Esophagus muscularis mucosa (tissue), 4 donors: ENCODE measurements at regions of chr17 and their contacts with region 1.

Region 1: DNA sequence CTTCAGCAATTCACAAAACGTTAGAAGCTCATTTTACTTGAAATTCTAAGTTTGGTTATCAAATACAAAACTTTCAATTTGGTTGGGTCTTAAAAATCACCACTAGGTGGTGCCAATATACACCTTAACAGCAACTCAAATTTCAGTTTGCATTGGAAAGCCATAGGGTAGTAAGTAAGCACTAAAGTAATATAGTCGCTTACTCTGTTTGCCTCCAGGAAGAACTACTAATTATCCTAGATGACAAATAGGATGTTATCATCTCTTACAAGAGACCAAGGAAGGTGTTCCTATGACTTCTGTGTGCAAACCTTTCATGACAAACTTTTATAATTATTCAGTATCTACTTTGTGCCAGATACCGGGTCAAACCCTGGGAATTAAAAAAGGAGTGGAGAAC is 93.3 kb downstream of the MYO1D start:
- DNase-seq: no peak
- H3K4me3 ChIP-seq: no peak overlapping the region
- H3K27ac ChIP-seq: no peak overlapping the region
- H3K4me1 ChIP-seq: no peaks in the 10 kb centered on the region
- H3K27me3 ChIP-seq: no peaks in the 10 kb centered on the region
- CTCF ChIP-seq: peak; percentile 74 to 84 (median 78)
- EP300 ChIP-seq: no peak
- POLR2A ChIP-seq: no peak

Region 2: DNA sequence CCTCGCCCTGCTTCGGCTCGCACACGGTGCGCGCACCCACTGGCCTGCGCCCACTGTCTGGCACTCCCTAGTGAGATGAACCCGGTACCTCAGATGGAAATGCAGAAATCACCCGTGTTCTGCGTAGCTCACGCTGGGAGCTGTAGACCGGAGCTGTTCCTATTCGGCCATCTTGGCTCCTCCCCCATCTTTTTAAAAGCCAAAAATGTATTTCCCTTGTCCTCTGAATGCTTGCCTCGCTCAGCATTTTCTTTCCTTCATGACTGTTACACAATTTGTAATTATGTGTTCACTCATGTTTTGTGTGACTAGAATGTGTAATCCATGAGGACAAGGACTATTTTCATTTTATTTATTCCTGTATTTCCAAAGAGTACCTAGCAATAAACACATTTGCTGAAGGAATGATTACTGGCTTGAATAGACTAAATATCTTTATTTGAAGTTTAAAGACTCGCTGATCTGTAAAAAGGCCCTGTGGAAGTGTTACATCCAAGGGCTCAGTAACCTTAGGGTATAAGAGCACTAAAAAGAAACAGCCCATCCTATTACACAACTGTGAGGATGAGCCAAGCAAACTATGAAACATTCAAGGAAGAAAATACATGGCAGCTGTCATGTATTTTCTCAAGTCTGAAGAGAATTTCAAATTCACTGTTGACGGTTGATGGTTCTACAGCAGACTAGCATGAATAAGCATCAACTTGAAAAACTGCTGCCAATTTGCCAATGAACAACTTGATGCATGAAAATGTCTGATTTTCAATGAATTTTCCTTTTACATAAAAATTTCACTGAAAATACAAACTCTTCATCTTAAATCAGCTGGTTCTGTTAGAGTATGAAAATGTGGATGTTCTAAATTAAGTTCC is 99.3 kb before region 1 on chr17:
- intact Hi-C with region 1: no loop called
- DNase-seq: no peak
- H3K4me3 ChIP-seq: no peak overlapping the region
- H3K27ac ChIP-seq: no peak overlapping the region
- H3K4me1 ChIP-seq: no peaks in the 10 kb centered on the region
- H3K27me3 ChIP-seq: no peaks in the 10 kb centered on the region
- CTCF ChIP-seq: no peak
- EP300 ChIP-seq: no peak
- POLR2A ChIP-seq: no peak

Region 3: GRCh38 chr17:32877164-32877764 is 93.7 kb after region 1 on chr17:
- intact Hi-C with region 1: loop called (anchors 1 kb)
- DNase-seq: peak; percentile 94
- H3K4me3 ChIP-seq: peak overlapping the region; percentile 73 to 97 (median 90)
- H3K27ac ChIP-seq: peak overlapping the region; percentile 85 to 92 (median 86)
- H3K4me1 ChIP-seq: peaks cover 11 to 27% (median 23%) of the 10 kb centered on the region in 4 donors
- H3K27me3 ChIP-seq: peaks cover 0 to 3% (median 0%) of the 10 kb centered on the region in 4 donors
- CTCF ChIP-seq: peak; percentile 87 to 98 (median 94)
- EP300 ChIP-seq: no peak
- POLR2A ChIP-seq: no peak

Region 4: GRCh38 chr17:32899236-32900013 is 115.8 kb after region 1 on chr17:
- intact Hi-C with region 1: no loop called
- DNase-seq: peak; percentile 21
- H3K4me3 ChIP-seq: no peak overlapping the region
- H3K27ac ChIP-seq: no peak overlapping the region
- H3K4me1 ChIP-seq: no peaks in the 10 kb centered on the region
- H3K27me3 ChIP-seq: peaks cover 0 to 6% (median 0%) of the 10 kb centered on the region in 4 donors
- CTCF ChIP-seq: no peak
- EP300 ChIP-seq: no peak
- POLR2A ChIP-seq: no peak

Region 5: DNA sequence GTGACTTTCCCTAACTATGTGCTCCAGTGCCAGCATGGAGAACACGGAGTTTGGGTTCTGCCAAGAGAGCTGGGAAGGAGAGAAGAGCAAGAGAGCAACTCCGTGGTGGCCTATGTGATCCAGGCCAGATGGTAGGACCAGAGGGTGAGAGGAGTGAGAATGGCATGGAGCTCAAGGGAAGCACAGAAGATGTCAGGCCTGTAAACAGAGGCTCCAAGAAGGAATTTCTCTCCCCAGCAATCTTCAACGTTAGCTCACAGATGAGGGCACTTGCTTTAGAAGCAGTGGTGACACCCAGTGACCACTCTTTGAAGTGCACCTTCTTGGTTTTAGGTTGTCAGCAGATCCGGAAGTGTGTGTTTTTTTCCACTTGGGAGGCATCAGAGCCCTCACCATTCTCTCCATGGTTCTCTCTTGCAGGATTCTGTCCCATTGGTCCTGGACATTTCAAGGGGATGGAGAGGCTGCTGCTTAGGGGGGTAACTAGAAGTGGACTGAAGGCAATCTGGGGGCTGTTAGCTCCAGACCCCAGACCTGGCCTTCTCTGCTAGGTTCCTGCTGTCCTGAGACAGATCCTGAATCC is 126.3 kb after region 1 on chr17:
- intact Hi-C with region 1: loop called (anchors 10 kb)
- DNase-seq: peak; percentile 94
- H3K4me3 ChIP-seq: no peak overlapping the region
- H3K27ac ChIP-seq: no peak overlapping the region
- H3K4me1 ChIP-seq: peaks cover 6 to 20% (median 16%) of the 10 kb centered on the region in 4 donors
- H3K27me3 ChIP-seq: no peaks in the 10 kb centered on the region
- CTCF ChIP-seq: peak; percentile 69 to 81 (median 77)
- EP300 ChIP-seq: no peak
- POLR2A ChIP-seq: no peak

Region 6: DNA sequence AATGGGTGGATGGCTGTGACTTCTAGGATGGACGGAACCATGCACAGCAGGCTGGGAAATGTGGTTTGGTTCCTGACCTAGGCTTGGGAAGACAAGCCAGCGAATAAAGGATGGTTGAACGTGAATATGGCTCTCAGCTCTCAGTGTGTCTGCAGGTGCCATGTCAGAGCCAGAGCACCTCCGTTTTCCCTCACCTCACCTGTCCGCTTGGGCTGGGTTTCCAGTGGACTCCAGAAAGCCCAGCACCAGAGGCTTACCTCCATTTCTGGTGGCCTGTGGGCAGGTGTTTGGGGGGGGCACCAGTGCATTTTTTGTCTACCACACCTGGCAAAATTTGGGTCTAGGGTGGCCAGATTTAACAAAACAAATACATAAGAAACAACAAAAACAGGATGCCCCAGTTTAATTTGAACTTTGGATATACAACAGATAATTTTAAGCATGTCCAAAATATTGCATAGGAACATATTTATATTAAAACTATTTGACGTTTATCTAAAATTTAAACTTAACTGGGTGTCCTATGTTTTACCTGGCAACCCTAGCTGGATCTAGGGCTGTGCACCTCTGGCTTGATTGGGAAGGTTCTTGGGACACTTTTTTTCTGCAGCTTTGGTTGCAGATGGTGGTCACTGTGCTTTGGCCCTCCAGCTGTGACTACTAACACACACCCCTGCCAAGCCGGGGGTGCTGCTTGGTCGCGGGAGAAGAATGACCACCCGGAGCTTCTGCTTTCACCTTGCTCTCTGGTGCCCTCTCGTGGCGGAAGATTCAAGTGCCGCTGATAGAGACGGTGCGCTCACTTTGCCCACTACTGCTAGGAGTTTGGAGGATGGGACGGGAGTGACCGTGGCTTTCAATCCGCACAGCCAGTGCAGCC is 214.4 kb after region 1 on chr17:
- intact Hi-C with region 1: loop called (anchors 5 kb)
- DNase-seq: no peak
- H3K4me3 ChIP-seq: no peak overlapping the region
- H3K27ac ChIP-seq: no peak overlapping the region
- H3K4me1 ChIP-seq: peaks cover 0 to 7% (median 6%) of the 10 kb centered on the region in 4 donors
- H3K27me3 ChIP-seq: peaks cover 0 to 23% (median 0%) of the 10 kb centered on the region in 4 donors
- CTCF ChIP-seq: peak; percentile 72 to 95 (median 83)
- EP300 ChIP-seq: no peak
- POLR2A ChIP-seq: no peak

Region 7: GRCh38 chr17:33750943-33751701 is 967.5 kb after region 1 on chr17:
- intact Hi-C with region 1: loop called (anchors 10 kb)
- DNase-seq: no peak
- H3K4me3 ChIP-seq: peak overlapping the region in 2 of 4 donors; percentile 22 to 38
- H3K27ac ChIP-seq: no peak overlapping the region
- H3K4me1 ChIP-seq: peaks cover 4 to 11% (median 7%) of the 10 kb centered on the region in 4 donors
- H3K27me3 ChIP-seq: peaks cover 0 to 75% (median 13%) of the 10 kb centered on the region in 4 donors
- CTCF ChIP-seq: peak; percentile 88 to 93 (median 92)
- EP300 ChIP-seq: no peak
- POLR2A ChIP-seq: no peak